Colonic mucosa (tissue), 4 donors: ENCODE measurements at regions of chr11 and their contacts with region 1.

Region 1: GRCh38 chr11:123511037-123511870 is 81.2 kb downstream of the GRAMD1B start:
- DNase-seq: peak; percentile 76
- H3K4me3 ChIP-seq: no peak overlapping the region
- H3K27ac ChIP-seq: no peak overlapping the region
- H3K4me1 ChIP-seq: no peaks in the 10 kb centered on the region
- H3K27me3 ChIP-seq: no peaks in the 10 kb centered on the region
- CTCF ChIP-seq: peak; percentile 85

Region 2: DNA sequence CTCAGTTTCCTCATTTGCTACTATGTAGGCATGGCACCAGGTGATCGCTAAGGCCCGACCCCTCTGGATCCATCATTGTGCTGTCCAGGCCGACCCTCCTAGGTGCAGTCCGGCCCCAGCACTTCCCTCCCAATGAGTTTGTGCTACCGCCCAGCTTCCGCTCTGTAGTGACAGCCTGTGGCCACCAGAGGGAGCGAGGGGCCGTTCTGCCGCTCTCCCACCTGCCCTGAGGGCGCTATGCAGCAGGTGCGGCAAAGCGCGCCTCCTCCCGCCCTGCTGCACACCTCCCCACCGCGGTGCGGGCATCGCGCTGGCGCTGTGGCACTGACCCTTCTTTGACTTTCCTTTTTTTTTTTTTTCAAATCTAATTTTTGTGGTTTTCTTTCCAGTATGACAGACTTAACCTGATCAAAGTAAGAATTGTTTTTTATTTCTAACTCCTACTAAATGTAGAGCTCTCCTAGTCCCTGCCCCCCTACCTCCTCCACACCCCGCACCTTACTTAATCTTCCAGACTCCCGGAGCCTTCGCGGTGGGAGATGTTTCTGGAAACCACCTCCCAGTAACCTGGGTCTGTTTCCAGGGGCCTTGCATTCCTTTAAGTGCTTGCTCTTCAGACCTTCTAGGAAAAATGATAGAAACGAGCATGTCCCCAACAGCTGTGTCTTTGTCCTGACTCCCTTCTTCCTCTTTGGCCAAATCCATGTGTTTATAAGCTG is 69.5 kb after region 1 on chr11:
- intact Hi-C with region 1: loop called (anchors 2 kb)
- DNase-seq: peak; percentile 75
- H3K4me3 ChIP-seq: no peak overlapping the region
- H3K27ac ChIP-seq: no peak overlapping the region
- H3K4me1 ChIP-seq: no peaks in the 10 kb centered on the region
- H3K27me3 ChIP-seq: no peaks in the 10 kb centered on the region
- CTCF ChIP-seq: peak; percentile 93